ENCODE measurements at regions of chr18 and their contacts with region 1.

Region 1: DNA sequence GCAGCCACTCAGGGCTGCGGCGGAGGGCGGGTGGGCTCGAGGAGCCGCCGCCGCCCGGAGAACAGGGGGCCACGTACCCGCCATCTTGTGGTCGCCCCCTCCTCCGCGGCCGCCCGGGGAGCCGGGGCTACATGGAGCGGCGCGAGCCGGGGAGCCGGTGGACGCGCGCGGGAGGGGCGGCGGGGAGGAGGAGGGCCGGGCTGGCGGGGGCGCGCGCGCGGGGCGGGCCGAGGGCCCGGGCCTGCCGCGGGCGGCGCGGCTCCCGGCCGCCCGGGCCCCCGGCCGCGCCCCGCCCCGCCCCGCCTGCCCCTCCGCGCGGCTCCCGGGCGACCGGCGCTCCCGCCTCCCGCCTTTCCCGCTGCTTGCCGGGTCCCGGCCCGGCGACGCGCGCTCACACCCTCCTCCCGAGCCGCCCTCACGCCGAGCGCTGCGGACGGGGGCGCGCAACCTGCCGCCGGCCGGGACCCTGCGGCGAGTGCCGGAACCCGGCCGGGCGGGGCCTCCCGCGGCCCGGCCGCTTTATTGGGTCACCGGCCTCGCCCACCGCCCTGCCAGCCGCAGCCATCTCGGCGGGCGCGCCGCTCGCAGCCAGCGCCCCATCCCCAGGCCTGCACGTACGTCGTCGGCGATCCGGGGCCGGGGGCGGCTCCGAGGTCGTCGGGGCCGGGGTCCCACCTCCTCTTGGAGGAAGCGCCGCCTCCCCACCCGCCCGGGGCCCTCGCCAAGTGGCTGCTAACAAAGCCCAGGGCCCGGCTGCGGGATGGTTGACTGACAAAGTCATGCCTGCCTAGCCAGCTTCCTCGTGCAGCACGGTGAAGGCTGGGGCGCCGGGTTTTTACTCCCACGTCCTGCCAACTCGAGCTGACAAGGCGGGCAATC is at the start of gene PPP4R1:
- DNase-seq: peak; percentile 83 to 90 (median 88)
- ATAC-seq: peak; percentile 44 to 86 (median 78)
- H3K4me3 ChIP-seq: peak within 1 kb of the TSS; percentile 74 to 99 (median 85)
- H3K27ac ChIP-seq: peak within 1 kb of the TSS; percentile 92 to 99 (median 97)
- H3K4me1 ChIP-seq: peaks cover 0 to 43% (median 25%) of the 10 kb centered on the region in 12 donors
- H3K27me3 ChIP-seq: no peaks in the 10 kb centered on the region
- CTCF ChIP-seq: no peak
- POLR2A ChIP-seq: peak in 1 of 2 donors; percentile 29
- total RNA-seq, gene PPP4R1: 39.1 to 81.3 (median 63.8) TPM

Region 2: DNA sequence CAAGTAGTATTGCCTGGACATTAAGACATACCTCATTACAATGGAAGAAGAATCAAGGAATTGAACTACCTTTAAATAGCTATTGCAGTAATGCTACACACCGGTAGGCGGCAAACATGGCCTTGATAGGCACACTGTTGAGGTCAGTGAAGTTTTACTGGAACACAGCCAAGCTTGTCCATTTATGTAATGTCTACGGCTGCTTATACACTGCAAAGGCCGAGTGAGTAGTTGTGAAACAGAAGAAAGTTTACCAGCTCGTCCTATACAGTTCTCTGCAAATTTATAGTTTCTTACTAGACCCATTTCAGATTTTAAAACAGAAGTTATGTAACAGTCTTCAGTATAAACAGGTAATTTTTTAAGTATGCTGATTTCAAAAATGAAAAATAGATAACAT is 39.1 kb before region 1 on chr18:
- intact Hi-C with region 1: loop called in 2 of 10 experiments (anchors 5 kb)
- DNase-seq: peak in 4 of 5 donors; percentile 80 to 88 (median 82)
- ATAC-seq: peak; percentile 96 to 99 (median 98)
- H3K4me3 ChIP-seq: peak overlapping the region in 1 of 12 donors; percentile 6
- H3K27ac ChIP-seq: peak overlapping the region in 7 of 12 donors; percentile 6 to 40 (median 23)
- H3K4me1 ChIP-seq: peaks cover 0 to 9% (median 4%) of the 10 kb centered on the region in 12 donors
- H3K27me3 ChIP-seq: no peaks in the 10 kb centered on the region
- CTCF ChIP-seq: peak; percentile 73 to 95 (median 86)
- POLR2A ChIP-seq: no peak

Region 3: GRCh38 chr18:9643549-9643948 is 28.9 kb after region 1 on chr18:
- intact Hi-C with region 1: loop called in 1 of 10 experiments (anchors 1 kb)
- DNase-seq: peak in 3 of 5 donors; percentile 15 to 35 (median 28)
- ATAC-seq: peak; percentile 85 to 98 (median 94)
- H3K4me3 ChIP-seq: no peak overlapping the region
- H3K27ac ChIP-seq: peak overlapping the region in 8 of 12 donors; percentile 26 to 66 (median 47)
- H3K4me1 ChIP-seq: peaks cover 0 to 14% (median 2%) of the 10 kb centered on the region in 12 donors
- H3K27me3 ChIP-seq: no peaks in the 10 kb centered on the region
- CTCF ChIP-seq: no peak
- POLR2A ChIP-seq: no peak

Region 4: GRCh38 chr18:9673296-9674251 is 58.9 kb after region 1 on chr18:
- intact Hi-C with region 1: loop called in 6 of 10 experiments (anchors 5 to 10 kb)
- DNase-seq: peak in 3 of 5 donors; percentile 34 to 44 (median 36)
- ATAC-seq: peak; percentile 81 to 96 (median 95)
- H3K4me3 ChIP-seq: no peak overlapping the region
- H3K27ac ChIP-seq: peak overlapping the region in 2 of 12 donors; percentile 25 to 36
- H3K4me1 ChIP-seq: peaks cover 0 to 9% (median 0%) of the 10 kb centered on the region in 12 donors
- H3K27me3 ChIP-seq: no peaks in the 10 kb centered on the region
- CTCF ChIP-seq: peak in 8 of 12 donors; percentile 8 to 48 (median 32)
- POLR2A ChIP-seq: peak in 1 of 2 donors; percentile 9

Region 5: GRCh38 chr18:9683407-9684396 is 69.1 kb after region 1 on chr18:
- intact Hi-C with region 1: loop called in 5 of 10 experiments (anchors 5 to 10 kb)
- DNase-seq: no peak
- ATAC-seq: peak; percentile 50 to 60 (median 54)
- H3K4me3 ChIP-seq: peak overlapping the region in 1 of 12 donors; percentile 13
- H3K27ac ChIP-seq: peak overlapping the region in 8 of 12 donors; percentile 52 to 79 (median 72)
- H3K4me1 ChIP-seq: peaks cover 0 to 26% (median 11%) of the 10 kb centered on the region in 12 donors
- H3K27me3 ChIP-seq: no peaks in the 10 kb centered on the region
- CTCF ChIP-seq: peak in 10 of 12 donors; percentile 12 to 59 (median 40)
- POLR2A ChIP-seq: no peak

Region 6: DNA sequence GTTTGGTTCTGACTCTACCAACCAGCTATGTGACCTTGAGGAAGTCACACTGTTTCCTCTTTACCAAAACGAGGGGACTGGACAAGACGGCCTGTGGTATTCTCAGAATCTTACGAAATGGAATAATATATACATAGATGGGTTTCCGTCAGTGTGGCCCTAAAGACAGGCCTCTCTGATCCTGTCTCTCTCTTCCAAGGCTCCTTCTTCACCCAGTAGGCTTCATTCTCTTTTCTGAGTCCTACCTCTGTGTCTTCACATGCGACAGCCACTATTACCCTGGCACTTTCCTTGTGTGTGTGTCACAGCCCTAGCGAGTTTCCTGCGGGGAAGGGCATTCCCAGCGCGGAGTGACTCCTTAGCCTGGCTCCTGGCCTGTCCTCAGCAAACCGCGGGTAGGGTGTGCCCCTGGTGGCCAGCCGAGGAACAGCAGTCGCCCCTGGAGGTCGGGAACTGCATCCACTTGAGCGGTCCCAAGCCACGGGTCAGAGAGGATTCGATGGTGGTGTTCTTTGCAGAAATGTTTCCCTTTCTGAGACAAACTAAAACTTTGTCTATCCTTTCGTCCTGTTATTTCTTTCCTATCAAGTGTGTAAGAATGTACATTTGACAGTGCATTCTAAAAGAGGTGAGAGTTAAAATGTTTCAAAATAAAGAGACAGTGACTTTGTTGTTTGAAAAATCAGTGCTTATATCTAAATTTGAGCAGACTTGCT is 156.8 kb after region 1 on chr18:
- intact Hi-C with region 1: loop called in 1 of 10 experiments (anchors 1 kb)
- DNase-seq: peak; percentile 84 to 92 (median 87)
- ATAC-seq: peak; percentile 87 to 98 (median 94)
- H3K4me3 ChIP-seq: peak overlapping the region in 2 of 12 donors; percentile 8 to 12
- H3K27ac ChIP-seq: peak overlapping the region in 7 of 12 donors; percentile 1 to 86 (median 14)
- H3K4me1 ChIP-seq: peaks cover 0 to 75% (median 9%) of the 10 kb centered on the region in 12 donors
- H3K27me3 ChIP-seq: no peaks in the 10 kb centered on the region
- CTCF ChIP-seq: peak; percentile 95 to 99 (median 98)
- POLR2A ChIP-seq: no peak

Region 7: DNA sequence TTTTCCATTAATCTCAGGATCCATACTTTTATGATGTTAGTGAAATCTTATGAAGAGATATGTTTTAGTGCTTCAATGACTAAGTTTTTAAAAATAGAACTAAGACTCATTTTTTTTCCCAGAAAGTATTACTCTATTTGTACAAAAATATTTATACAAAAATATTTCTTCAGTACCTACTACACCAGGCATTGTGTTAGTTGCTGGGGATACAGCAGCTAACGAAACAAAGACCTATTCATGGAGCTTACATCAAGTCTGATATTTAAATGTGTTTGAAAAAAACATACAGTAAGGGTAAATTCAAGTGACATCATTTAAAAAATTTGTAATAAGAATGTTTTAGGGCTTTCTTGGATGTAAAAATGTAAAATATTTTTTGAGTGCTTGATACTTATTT is 310.7 kb after region 1 on chr18:
- intact Hi-C with region 1: loop called in 1 of 10 experiments (anchors 10 kb)
- DNase-seq: no peak
- ATAC-seq: peak in 2 of 4 donors; percentile 31 to 55
- H3K4me3 ChIP-seq: no peak overlapping the region
- H3K27ac ChIP-seq: peak overlapping the region in 7 of 12 donors; percentile 2 to 51 (median 18)
- H3K4me1 ChIP-seq: peaks cover 3 to 99% (median 87%) of the 10 kb centered on the region in 12 donors
- H3K27me3 ChIP-seq: no peaks in the 10 kb centered on the region
- CTCF ChIP-seq: no peak
- POLR2A ChIP-seq: no peak

Measured in heart left ventricle (tissue), 16 donors.